Activated B cell treated with CpG ODN at 0.5 μM for 24 hours (primary cell): ENCODE measurements at regions of chr4 and their contacts with region 1.

Region 1: DNA sequence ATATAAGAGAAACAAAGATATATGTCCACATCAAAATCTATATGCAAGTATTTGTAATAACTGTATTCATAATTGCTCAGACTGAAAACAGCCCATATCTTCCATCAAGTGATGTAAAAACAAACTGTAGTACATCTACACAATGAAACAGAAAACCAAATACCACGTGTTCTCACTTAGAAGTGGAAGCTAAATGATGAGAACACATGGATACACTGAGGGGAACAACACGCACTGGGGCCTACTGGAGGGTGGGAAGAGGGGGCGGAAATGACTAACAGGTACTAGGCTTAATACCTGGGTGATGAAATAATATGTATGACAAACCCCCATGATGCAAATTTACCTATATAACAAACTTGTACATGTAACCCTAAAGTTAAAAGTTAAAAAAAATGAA is 42.7 kb downstream of the UBA6 start:
- DNase-seq: no peak
- ATAC-seq: no peak
- H3K4me3 Mint-ChIP-seq: no peak overlapping the region
- H3K27ac Mint-ChIP-seq: no peak overlapping the region
- H3K4me1 Mint-ChIP-seq: peaks cover 18% of the 10 kb centered on the region
- H3K27me3 Mint-ChIP-seq: no peaks in the 10 kb centered on the region
- CTCF ChIP-seq: no peak

Region 2: GRCh38 chr4:67678612-67679011 is 20.3 kb after region 1 on chr4:
- CTCF ChIA-PET with region 1: no interaction called
- POLR2A ChIA-PET with region 1: no interaction called
- intact Hi-C with region 1: loop called (anchors 2 kb)
- DNase-seq: no peak
- ATAC-seq: no peak
- H3K4me3 Mint-ChIP-seq: no peak overlapping the region
- H3K27ac Mint-ChIP-seq: no peak overlapping the region
- H3K4me1 Mint-ChIP-seq: no peaks in the 10 kb centered on the region
- H3K27me3 Mint-ChIP-seq: no peaks in the 10 kb centered on the region
- CTCF ChIP-seq: no peak